Aorta (tissue), 5 donors: ENCODE measurements at regions of chr2 and their contacts with region 1.

Region 1: GRCh38 chr2:218230882-218231281 is 13.9 kb downstream of the ARPC2 start:
- DNase-seq: no peak
- ATAC-seq: no peak
- H3K4me3 ChIP-seq: no peak overlapping the region
- H3K27ac ChIP-seq: peak overlapping the region; percentile 61 to 67
- H3K4me1 ChIP-seq: peaks cover 5 to 6% of the 10 kb centered on the region in 2 donors
- H3K27me3 ChIP-seq: no peaks in the 10 kb centered on the region

Region 2: DNA sequence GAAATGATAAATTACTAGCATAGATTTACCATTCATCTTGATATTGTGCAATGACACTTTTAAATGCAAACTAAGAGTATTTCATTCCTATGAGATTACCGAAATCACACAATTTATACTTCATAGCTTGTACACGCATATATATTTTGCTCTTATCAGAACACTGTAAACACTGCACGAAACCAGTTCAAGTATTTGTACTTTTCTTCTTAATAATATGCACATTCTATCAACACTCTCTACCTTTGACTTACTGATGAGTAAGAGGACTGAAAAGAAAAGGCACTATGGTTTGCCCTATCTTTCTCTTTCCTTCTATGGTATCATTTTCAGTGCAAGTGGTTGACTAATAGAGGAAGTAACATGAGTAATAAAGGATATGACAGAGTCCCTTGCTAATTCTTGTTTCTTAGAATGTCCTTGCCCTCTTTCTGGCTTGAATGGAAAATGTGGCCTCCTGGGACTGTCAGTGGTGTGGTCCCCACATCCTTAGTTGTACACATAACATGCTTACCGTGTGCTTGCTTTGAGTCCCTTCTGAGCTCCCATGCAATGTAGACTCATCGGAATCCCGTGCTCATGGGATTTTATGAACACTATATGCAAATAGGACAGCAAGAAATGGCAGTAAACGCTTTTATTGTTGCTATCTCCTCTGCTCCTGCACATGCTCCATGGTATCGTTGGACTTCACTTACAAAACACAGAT is 1007.5 kb before region 1 on chr2:
- intact Hi-C with region 1: no loop called
- DNase-seq: peak in 1 of 2 donors; percentile 66
- ATAC-seq: peak; percentile 66
- H3K4me3 ChIP-seq: no peak overlapping the region
- H3K27ac ChIP-seq: peak overlapping the region; percentile 11 to 21
- H3K4me1 ChIP-seq: peaks cover 4 to 6% of the 10 kb centered on the region in 2 donors
- H3K27me3 ChIP-seq: no peaks in the 10 kb centered on the region

Region 3: DNA sequence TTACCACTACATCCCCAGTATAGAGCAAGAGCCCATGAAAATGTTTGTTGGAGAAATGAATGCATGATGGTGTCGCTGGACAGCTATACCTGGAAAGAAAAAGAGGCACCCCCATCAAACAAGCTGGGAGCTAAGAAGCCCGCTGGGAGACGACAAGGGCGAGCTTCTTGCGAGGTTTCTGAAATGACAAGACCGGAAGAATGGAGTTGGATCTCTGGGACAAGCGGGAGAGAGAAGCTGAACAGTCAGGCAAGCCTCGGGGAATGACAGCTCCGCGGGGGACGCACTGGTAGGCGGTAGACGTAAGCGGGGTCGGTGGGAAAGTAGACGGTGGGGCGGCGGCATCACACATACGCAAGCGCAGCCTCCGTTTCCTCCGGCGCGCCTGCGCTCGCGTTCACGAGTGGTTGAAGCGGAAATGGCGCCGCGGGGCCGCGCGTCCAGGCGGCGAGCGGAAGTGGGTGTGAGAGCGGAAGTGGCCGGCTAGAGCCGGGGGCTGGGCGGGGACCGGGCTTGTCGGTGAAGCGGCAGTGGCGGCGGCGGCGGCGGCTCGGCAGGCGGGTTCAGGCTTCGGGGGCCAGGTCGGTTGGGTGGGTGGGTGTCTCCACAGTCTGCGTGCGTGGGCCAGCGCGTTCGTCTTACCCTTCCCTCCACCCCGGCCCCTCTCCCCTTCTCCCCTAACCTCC is 14.1 kb before region 1 on chr2 and contains the start of gene ARPC2:
- intact Hi-C with region 1: loop called in 1 of 2 experiments (anchors 2 kb)
- DNase-seq: peak; percentile 97 to 99
- ATAC-seq: peak; percentile 98
- H3K4me3 ChIP-seq: peak within 1 kb of the TSS; percentile 94 to 97
- H3K27ac ChIP-seq: peak within 1 kb of the TSS; percentile 64 to 92
- H3K4me1 ChIP-seq: peaks cover 3 to 10% of the 10 kb centered on the region in 2 donors
- H3K27me3 ChIP-seq: no peaks in the 10 kb centered on the region
- total RNA-seq, gene ARPC2: 351 to 367 TPM